ENCODE measurements at regions of chr9 and their contacts with region 1.

Region 1: DNA sequence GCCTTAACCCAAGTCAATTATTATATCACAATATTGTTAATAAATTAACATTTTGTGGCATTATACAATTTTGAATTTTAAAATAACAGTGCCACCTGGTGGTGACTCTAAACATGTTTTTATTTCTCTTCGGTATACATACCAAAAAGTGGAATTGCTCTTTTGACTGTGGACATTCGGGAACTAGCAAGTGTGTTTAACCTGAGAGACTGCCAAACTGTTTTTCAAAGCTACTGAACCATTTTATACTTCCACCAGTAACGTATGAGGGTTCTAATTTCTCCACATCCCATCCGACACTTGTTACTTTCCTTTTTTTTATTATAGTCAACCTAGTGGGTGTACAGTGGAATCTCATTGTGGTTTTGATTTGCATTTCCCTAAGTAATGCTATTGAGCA is 18.3 kb upstream of the HSDL2 start:
- DNase-seq: no peak
- H3K4me3 ChIP-seq: no peak overlapping the region
- H3K27ac ChIP-seq: no peak overlapping the region
- H3K4me1 ChIP-seq: peaks cover 0 to 3% (median 0%) of the 10 kb centered on the region in 4 donors
- H3K27me3 ChIP-seq: no peaks in the 10 kb centered on the region
- CTCF ChIP-seq: peak; percentile 56 to 65 (median 64)
- EP300 ChIP-seq: no peak
- POLR2A ChIP-seq: no peak

Region 2: GRCh38 chr9:111759762-111760639 is 601.6 kb before region 1 on chr9:
- intact Hi-C with region 1: loop called (anchors 5 kb)
- DNase-seq: no peak
- H3K4me3 ChIP-seq: no peak overlapping the region
- H3K27ac ChIP-seq: no peak overlapping the region
- H3K4me1 ChIP-seq: peaks cover 0 to 8% (median 0%) of the 10 kb centered on the region in 4 donors
- H3K27me3 ChIP-seq: no peaks in the 10 kb centered on the region
- CTCF ChIP-seq: peak; percentile 67 to 73 (median 72)
- EP300 ChIP-seq: no peak
- POLR2A ChIP-seq: no peak

Region 3: DNA sequence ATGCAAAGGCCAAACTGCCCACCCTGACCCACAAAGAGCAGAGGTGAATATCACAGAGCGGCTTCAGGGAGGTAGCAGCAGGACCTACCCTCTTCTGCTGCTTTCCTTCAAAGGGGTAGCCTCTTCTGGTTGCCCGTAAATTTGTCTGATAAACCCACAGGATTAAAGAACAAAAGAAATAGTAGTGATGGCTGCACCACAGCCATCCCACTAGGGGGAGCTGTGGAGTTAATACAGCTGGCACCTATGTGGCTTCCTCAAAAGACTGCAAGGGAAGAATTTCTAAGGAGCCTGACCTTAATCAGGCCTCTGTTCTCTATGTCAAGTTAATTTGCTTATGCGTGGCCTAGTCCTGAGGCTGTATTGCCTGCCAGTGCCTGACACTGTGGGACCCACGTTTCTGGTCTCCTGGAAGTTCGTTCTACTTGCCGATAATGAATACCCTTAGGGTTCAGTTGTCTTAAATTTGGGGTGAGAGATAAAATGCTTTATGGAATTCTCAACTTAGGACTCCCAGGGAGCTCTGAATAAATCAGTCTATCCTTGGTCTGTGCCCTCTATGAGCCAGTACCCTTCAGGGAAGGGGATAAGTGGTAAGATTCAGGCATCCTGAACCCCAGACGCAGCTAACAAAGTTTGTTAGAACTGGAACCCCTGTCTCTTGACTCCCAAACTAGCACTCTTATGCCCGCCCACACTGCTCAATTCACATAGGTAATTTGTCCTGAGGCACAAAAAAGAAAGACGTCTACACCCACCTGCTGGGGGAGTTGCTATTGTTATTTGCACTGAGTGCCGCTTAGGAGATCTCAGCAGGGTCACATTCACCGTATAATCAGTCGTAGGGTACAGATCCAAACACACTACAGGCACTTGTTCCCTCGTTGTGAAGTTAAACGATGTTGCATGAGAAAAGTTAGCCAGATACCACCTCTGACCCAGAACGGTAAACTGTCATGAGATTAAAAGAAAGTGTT is 263.6 kb before region 1 on chr9:
- intact Hi-C with region 1: loop called (anchors 1 kb)
- DNase-seq: peak; percentile 88
- H3K4me3 ChIP-seq: no peak overlapping the region
- H3K27ac ChIP-seq: no peak overlapping the region
- H3K4me1 ChIP-seq: no peaks in the 10 kb centered on the region
- H3K27me3 ChIP-seq: no peaks in the 10 kb centered on the region
- CTCF ChIP-seq: peak; percentile 77 to 94 (median 91)
- EP300 ChIP-seq: no peak
- POLR2A ChIP-seq: no peak

Measured in esophagus muscularis mucosa (tissue), 4 donors.